Vagina (tissue), 2 donors: ENCODE measurements at regions of chr14 and their contacts with region 1.

Region 1: DNA sequence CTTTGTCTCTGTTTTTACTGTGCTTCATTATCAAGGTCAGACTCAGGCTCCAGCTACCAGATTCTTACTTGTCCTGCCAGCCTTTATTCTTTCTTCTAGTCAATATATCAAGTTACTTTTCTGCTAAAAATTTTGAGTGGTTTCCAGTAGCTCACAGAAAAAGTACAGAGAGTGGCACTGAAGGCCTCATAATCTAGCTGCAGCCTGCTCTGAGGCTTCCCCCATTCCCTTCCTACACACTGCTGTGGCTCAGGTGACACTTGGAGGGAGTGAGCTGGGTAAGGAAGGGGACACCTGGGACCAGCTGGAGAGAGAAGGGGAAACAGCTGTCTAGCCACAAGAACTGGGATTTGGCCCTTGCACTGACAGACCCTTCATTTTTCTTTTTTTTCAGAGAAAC is 25.4 kb downstream of the TTC6 start:
- DNase-seq: no peak
- H3K4me3 ChIP-seq: no peak overlapping the region
- H3K27ac ChIP-seq: no peak overlapping the region
- H3K4me1 ChIP-seq: peaks cover 8% of the 10 kb centered on the region
- H3K27me3 ChIP-seq: no peaks in the 10 kb centered on the region
- CTCF ChIP-seq: no peak
- POLR2A ChIP-seq: no peak

Region 2: DNA sequence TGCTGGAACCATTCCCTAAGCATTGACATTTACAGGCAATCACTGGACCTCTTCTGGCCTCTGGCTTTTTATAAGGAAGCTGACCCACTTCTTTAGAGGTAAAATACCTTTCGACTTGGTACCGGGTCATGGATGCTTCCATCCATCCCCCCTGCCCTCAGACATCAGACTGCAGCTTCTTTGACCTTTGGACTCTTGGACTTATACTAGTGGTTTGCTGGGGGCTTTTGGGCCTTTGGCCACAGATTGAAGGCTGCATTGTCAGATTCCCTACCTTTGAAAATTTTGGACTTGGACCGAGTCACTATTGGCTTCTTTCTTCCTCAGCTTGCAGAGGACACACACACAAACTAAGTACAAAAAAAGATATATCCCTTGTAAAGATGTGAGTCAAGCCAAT is 60.6 kb after region 1 on chr14:
- intact Hi-C with region 1: loop called (anchors 2 kb)
- DNase-seq: no peak
- H3K4me3 ChIP-seq: no peak overlapping the region
- H3K27ac ChIP-seq: no peak overlapping the region
- H3K4me1 ChIP-seq: no peaks in the 10 kb centered on the region
- H3K27me3 ChIP-seq: no peaks in the 10 kb centered on the region
- CTCF ChIP-seq: no peak
- POLR2A ChIP-seq: no peak

Region 3: DNA sequence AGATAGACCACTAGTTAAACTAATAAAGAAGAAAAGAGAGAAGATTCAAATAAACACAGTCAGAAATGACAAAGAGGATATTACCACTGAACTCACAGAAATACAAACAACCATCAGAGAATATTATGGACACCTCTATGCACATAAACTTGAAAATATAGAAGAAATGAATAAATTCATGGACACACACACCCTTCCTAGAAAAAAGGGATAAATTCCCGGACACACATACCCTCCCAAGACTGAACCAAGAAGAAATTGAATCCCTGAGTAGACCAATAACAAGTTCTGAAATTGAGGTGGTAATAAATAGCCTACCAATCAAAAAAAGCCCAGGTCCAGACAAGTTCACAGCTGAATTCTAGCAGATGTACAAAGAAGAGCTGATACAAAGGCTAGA is 1294.3 kb after region 1 on chr14:
- intact Hi-C with region 1: no loop called
- DNase-seq: no peak
- H3K4me3 ChIP-seq: no peak overlapping the region
- H3K27ac ChIP-seq: no peak overlapping the region
- H3K4me1 ChIP-seq: no peaks in the 10 kb centered on the region
- H3K27me3 ChIP-seq: no peaks in the 10 kb centered on the region
- CTCF ChIP-seq: no peak
- POLR2A ChIP-seq: no peak